CD4-positive, alpha-beta memory T cell (primary cell): ENCODE measurements at regions of chr18 and their contacts with region 1.

Region 1: DNA sequence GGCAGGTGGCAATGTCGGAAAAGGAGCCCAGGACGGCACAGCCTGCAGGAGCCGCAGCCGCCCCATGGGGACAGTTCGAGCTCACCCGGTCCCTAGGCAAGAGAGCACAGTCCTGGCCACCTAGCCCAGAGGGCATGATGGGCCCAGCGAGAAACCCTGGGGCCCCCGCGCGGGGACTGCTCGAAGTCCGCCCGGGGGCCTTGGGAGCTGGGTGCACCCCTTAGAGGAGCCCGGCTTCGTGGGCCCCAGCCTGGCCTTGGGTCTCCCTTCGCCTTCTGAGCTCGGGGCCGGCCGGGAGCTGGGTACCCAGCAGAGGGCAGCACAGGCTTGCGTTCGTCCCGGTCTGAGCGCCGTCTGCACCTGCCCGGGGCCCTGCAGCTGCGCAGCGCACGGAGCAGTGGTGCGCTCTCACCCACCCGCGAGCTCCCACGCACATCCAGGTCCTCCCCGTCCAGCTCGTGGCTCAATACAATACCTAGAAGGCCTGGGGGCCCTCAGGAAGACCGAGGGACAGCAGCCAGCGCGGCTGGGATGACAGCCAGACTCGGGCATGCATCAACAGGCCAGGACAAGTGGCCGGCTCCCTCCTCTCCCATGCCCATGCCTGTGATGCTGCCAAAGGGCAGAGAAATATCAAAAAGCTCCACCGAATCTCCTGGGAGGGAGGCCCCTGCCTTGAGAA is 96.2 kb upstream of the ZNF532 start:
- DNase-seq: peak in 4 of 5 donors; percentile 53 to 61 (median 57)
- H3K4me3 ChIP-seq: peak overlapping the region in 1 of 2 donors; percentile 12
- H3K4me3 Mint-ChIP-seq: peak overlapping the region in 7 of 8 donors; percentile 62 to 83 (median 67)
- H3K27ac ChIP-seq: no peak overlapping the region
- H3K27ac Mint-ChIP-seq: no peak overlapping the region
- H3K4me1 ChIP-seq: peaks cover 15% of the 10 kb centered on the region
- H3K4me1 Mint-ChIP-seq: peaks cover 3 to 15% (median 10%) of the 10 kb centered on the region in 4 donors
- H3K27me3 ChIP-seq: peaks cover 4% of the 10 kb centered on the region
- H3K27me3 Mint-ChIP-seq: peaks cover 23 to 31% of the 10 kb centered on the region in 2 donors

Region 2: DNA sequence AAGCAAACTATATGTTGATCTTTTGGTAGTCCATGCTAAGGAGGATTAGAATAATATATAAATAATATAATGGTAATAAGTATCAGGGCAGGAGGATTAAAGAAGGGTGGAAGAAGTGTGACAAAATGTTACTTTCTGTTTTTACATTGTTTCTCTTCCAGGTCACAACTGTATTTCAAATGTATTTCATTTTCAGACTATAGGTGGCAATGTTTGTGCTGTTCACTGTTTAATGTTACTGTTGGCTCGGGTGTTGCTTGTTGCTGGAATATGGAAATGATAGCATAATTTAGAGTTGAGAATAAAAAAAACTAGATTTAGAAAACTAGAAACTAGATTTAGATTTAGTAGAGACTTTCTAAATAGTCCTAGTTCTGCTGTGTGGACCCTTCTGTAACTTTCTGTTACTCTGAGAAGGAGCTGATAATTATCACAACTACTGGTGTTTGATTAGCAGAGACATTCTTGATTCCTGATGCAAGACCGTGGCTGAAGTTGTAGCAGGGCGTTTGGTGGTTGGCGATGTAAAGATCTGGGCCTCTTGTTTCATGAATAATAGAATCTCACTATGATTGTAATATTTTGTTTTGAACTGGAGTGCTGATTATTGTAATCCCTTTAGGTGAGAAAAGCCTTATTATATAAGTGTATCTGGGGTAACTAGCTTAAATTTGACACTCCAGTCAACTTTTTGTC is 716.5 kb before region 1 on chr18:
- CTCF ChIA-PET with region 1: no interaction called
- POLR2A ChIA-PET with region 1: no interaction called
- intact Hi-C with region 1: no loop called
- DNase-seq: peak in 1 of 5 donors; percentile 1
- H3K4me3 ChIP-seq: no peak overlapping the region
- H3K4me3 Mint-ChIP-seq: no peak overlapping the region
- H3K27ac ChIP-seq: no peak overlapping the region
- H3K27ac Mint-ChIP-seq: no peak overlapping the region
- H3K4me1 ChIP-seq: no peaks in the 10 kb centered on the region
- H3K4me1 Mint-ChIP-seq: peaks cover 0 to 7% (median 3%) of the 10 kb centered on the region in 4 donors
- H3K27me3 ChIP-seq: no peaks in the 10 kb centered on the region
- H3K27me3 Mint-ChIP-seq: peaks cover 0 to 3% of the 10 kb centered on the region in 2 donors

Region 3: DNA sequence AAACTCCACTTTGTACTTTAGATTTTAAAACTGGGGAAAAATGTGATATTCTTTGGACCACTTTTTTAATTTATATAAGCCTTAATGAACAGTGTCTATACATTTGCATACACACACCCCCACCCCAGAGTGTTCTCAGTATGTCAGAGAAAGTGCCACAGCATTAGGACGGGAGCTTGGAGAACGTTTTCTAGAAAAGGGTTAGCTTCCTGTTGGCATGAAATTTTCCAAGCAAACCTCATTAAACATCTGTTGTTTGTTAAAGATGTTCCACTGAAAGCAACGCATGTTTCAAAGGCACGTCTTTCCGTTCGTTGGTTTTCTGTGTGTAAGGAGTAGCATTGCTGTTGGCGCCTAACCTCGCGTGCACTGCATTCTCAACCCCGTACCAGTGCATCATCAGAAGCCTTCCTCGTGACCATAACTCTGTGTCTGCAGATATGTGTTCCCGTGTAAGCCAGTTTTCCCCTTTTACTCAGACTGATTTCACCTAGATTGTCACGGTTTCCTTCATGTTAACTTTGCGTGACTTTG is 368.0 kb before region 1 on chr18:
- CTCF ChIA-PET with region 1: interaction called, 4 read pairs
- POLR2A ChIA-PET with region 1: no interaction called
- intact Hi-C with region 1: loop called (anchors 1 kb)
- DNase-seq: peak in 1 of 5 donors; percentile 19
- H3K4me3 ChIP-seq: no peak overlapping the region
- H3K4me3 Mint-ChIP-seq: peak overlapping the region in 6 of 8 donors; percentile 55 to 83 (median 76)
- H3K27ac ChIP-seq: no peak overlapping the region
- H3K27ac Mint-ChIP-seq: peak overlapping the region in 4 of 7 donors; percentile 6 to 88 (median 58)
- H3K4me1 ChIP-seq: peaks cover 17% of the 10 kb centered on the region
- H3K4me1 Mint-ChIP-seq: peaks cover 5 to 28% (median 9%) of the 10 kb centered on the region in 4 donors
- H3K27me3 ChIP-seq: no peaks in the 10 kb centered on the region
- H3K27me3 Mint-ChIP-seq: no peaks in the 10 kb centered on the region

Region 4: DNA sequence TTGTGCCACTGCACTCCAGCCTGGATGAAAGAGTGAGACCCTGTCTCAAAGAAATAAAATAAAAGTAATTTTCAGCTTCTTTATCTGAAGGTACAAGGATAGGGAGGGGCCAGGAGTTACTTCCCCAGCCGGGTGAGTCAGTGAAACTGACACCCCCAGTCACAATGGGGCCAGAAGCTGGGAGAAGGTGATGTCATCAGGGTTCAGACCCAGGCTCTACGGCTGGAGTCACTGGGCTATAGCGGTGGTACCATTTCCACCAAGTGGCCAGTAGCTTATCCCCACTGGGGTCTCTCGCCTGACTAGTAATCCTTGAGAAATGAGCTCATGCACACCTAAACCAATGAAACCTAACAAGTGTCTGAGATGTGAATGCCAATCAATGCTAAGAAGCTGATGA is 247.5 kb before region 1 on chr18:
- CTCF ChIA-PET with region 1: interaction called, 827 read pairs
- POLR2A ChIA-PET with region 1: no interaction called
- intact Hi-C with region 1: no loop called
- DNase-seq: no peak
- H3K4me3 ChIP-seq: no peak overlapping the region
- H3K4me3 Mint-ChIP-seq: no peak overlapping the region
- H3K27ac ChIP-seq: no peak overlapping the region
- H3K27ac Mint-ChIP-seq: no peak overlapping the region
- H3K4me1 ChIP-seq: no peaks in the 10 kb centered on the region
- H3K4me1 Mint-ChIP-seq: no peaks in the 10 kb centered on the region
- H3K27me3 ChIP-seq: no peaks in the 10 kb centered on the region
- H3K27me3 Mint-ChIP-seq: peaks cover 9 to 14% of the 10 kb centered on the region in 2 donors

Region 5: DNA sequence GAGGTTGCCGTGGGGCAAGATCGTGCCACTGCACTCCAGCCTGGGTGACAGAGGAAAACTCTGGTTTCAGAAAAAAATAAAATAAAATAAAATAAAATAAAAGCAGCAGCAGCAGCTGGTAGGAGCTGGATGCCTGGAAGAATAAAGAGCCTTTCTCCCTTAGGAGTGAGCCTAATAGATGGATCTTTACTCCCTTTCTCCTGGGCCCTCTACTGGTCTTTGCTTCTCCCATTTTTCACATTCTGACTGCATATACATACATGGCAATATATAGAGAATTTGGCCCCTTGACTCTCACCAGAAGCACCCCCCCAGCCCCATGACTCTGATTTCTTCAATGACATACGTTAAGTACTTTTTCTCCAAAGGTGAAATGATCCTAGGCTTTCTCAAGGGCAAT is 107.0 kb before region 1 on chr18:
- CTCF ChIA-PET with region 1: interaction called, 17 read pairs
- POLR2A ChIA-PET with region 1: interaction called, 3 read pairs
- intact Hi-C with region 1: no loop called
- DNase-seq: no peak
- H3K4me3 ChIP-seq: no peak overlapping the region
- H3K4me3 Mint-ChIP-seq: no peak overlapping the region
- H3K27ac ChIP-seq: no peak overlapping the region
- H3K27ac Mint-ChIP-seq: peak overlapping the region in 1 of 7 donors; percentile 6
- H3K4me1 ChIP-seq: peaks cover 46% of the 10 kb centered on the region
- H3K4me1 Mint-ChIP-seq: peaks cover 31 to 56% (median 43%) of the 10 kb centered on the region in 4 donors
- H3K27me3 ChIP-seq: no peaks in the 10 kb centered on the region
- H3K27me3 Mint-ChIP-seq: no peaks in the 10 kb centered on the region

Region 6: DNA sequence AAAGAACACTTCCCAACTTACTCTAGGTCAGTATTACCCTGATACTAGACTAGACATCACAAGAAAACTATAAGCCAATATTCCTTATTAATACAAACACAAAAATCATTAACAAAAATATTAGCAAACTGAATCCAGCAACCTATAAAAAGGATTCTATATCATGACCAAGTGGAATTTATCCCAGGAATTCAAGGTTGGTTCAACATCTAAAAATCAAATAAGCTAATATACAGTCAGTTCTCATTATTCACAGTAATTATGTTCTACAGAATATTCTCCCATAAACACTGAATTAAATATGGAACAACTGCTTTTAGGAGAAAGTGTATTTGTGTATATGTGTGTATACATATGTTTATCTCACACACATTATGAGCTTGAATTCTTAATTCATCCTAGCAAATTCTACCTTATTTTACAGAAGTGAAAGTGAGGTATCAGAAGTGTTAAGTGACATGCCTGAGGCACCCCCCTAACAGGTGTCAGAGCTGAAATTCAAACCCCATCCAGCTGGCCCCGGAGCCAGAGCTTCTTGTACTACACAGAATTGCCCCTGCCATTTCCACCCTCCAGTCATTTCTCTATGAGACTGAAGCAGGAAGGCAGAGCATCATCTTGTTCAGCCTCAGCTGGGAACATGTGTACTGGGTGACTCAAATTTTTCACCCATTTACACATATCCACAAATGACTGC is 19.4 kb before region 1 on chr18:
- CTCF ChIA-PET with region 1: interaction called, 42 read pairs
- POLR2A ChIA-PET with region 1: no interaction called
- intact Hi-C with region 1: no loop called
- DNase-seq: no peak
- H3K4me3 ChIP-seq: no peak overlapping the region
- H3K4me3 Mint-ChIP-seq: no peak overlapping the region
- H3K27ac ChIP-seq: no peak overlapping the region
- H3K27ac Mint-ChIP-seq: no peak overlapping the region
- H3K4me1 ChIP-seq: no peaks in the 10 kb centered on the region
- H3K4me1 Mint-ChIP-seq: peaks cover 0 to 5% (median under 1%) of the 10 kb centered on the region in 4 donors
- H3K27me3 ChIP-seq: no peaks in the 10 kb centered on the region
- H3K27me3 Mint-ChIP-seq: no peaks in the 10 kb centered on the region

Region 7: GRCh38 chr18:59070181-59070912 is 301.9 kb after region 1 on chr18:
- CTCF ChIA-PET with region 1: interaction called, 293 read pairs
- POLR2A ChIA-PET with region 1: interaction called, 5 read pairs
- intact Hi-C with region 1: loop called (anchors 1 kb)
- DNase-seq: peak; percentile 60 to 70 (median 61)
- H3K4me3 ChIP-seq: no peak overlapping the region
- H3K4me3 Mint-ChIP-seq: no peak overlapping the region
- H3K27ac ChIP-seq: no peak overlapping the region
- H3K27ac Mint-ChIP-seq: no peak overlapping the region
- H3K4me1 ChIP-seq: no peaks in the 10 kb centered on the region
- H3K4me1 Mint-ChIP-seq: peaks cover 0 to 1% (median 0%) of the 10 kb centered on the region in 4 donors
- H3K27me3 ChIP-seq: no peaks in the 10 kb centered on the region
- H3K27me3 Mint-ChIP-seq: peaks cover 0 to 1% of the 10 kb centered on the region in 2 donors